ENCODE measurements at regions of chr12 and their contacts with region 1.

Region 1: DNA sequence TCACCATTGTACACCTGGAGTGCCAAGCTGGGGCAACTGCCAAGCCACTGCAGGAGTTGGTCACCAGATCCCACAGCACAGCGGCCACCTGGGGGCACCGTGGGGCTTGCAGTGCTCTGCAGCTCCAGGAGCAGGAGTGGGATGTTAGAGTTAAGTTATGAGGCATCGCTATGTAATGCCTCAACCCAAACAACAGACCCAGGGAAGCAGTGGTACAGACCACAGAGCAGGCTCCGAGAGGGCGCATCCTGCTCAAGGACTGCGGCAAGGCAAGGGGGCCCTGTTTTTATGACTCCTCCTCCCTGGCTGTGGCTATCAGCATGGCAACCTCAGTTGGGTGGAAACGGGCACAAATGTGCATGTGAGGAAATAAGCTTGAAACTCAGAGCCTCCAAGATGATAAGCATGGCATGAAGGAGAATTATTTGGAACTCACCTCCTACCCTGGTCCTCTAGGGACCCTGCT is 63.1 kb downstream of the ARL6IP4 start:
- DNase-seq: peak; percentile 93
- H3K4me3 ChIP-seq: no peak overlapping the region
- H3K27ac ChIP-seq: peak overlapping the region; percentile 21
- H3K27me3 ChIP-seq: no peaks in the 10 kb centered on the region
- CTCF ChIP-seq: peak; percentile 91

Region 2: DNA sequence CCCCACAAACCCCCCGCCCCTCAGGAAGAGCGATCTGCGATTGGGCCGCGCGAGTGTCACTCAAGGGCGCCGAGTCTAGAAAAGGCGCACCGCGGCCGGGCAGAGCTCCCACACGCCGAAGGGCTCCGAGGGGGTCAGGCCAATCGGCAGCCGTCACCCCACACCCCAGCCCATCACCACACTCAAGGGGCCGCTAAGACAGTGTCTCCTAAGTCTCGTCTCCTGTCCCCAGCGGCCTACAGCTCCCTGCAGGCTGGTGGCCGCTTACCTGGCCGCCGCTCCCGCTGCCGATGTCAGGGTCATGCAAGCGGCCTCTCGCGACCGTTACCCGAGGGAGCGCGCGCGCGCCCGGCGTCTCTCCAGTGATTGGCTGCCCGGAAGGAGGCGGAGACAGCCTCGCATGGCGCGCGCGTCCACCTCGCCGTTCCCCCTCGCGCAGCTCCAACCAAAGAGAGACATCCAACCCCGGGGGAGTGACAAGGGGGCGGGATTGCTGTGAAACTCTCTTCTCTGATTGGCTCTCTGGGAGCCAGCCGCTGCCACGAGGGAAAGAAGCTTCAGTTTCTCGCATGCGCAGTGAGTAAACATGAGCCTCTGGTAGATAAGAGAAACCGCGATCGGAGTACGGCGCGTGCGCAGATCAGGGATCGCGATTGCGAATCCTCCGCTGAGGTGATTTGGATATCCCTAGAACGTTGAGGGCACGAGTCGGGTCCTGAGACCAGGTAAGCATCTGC is 189.4 kb after region 1 on chr12 and contains the starts of genes MPHOSPH9 and MTRFR:
- in situ Hi-C with region 1: loop called (anchors 10 kb)
- DNase-seq: peak; percentile 99
- H3K4me3 ChIP-seq: peak within 1 kb of the TSS; percentile 80
- H3K27ac ChIP-seq: peak within 1 kb of the TSS; percentile 73
- H3K27me3 ChIP-seq: no peaks in the 10 kb centered on the region
- CTCF ChIP-seq: no peak